Left ventricle myocardium inferior (tissue), 1 donor: ENCODE measurements at regions of chr14 and their contacts with region 1.

Region 1: GRCh38 chr14:22570132-22570949 is 18.7 kb downstream of the DAD1 start:
- DNase-seq: no peak
- H3K4me3 ChIP-seq: no peak overlapping the region
- H3K27ac ChIP-seq: peak overlapping the region; percentile 30
- H3K4me1 ChIP-seq: peaks cover 26% of the 10 kb centered on the region
- H3K27me3 ChIP-seq: no peaks in the 10 kb centered on the region
- CTCF ChIP-seq: peak; percentile 86

Region 2: DNA sequence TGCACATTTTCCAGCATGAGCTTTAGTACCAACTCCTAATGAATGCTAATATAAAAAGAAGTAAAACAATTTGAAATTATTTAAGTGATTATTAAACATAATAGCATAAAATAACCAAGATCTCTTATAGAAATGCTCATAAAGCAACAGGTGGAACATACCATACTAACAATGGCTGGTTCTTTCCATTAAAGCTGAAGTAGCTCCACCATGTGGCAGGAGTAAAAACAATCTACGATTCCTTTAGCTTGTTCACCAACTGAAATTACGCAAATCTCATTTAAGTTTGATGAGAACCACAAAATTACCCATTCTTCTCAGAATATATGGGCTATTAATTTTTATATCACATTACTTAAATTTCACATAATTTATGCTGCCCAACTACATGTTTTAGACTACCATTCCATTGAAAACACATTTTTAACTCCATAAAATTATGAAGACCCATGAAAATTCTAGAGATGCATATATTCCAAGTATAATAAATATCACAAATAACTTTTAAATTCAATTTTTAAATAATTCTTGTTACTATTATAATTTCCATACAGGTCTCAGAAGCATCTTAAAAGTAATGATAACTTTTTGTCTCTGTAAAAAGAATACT is 194.9 kb before region 1 on chr14:
- intact Hi-C with region 1: no loop called
- DNase-seq: no peak
- H3K4me3 ChIP-seq: no peak overlapping the region
- H3K27ac ChIP-seq: no peak overlapping the region
- H3K4me1 ChIP-seq: peaks cover 15% of the 10 kb centered on the region
- H3K27me3 ChIP-seq: no peaks in the 10 kb centered on the region
- CTCF ChIP-seq: peak; percentile 72

Region 3: GRCh38 chr14:22630486-22630885 is 60.1 kb after region 1 on chr14:
- intact Hi-C with region 1: no loop called
- DNase-seq: no peak
- H3K4me3 ChIP-seq: no peak overlapping the region
- H3K27ac ChIP-seq: no peak overlapping the region
- H3K4me1 ChIP-seq: no peaks in the 10 kb centered on the region
- H3K27me3 ChIP-seq: peaks cover 3% of the 10 kb centered on the region
- CTCF ChIP-seq: no peak

Region 4: DNA sequence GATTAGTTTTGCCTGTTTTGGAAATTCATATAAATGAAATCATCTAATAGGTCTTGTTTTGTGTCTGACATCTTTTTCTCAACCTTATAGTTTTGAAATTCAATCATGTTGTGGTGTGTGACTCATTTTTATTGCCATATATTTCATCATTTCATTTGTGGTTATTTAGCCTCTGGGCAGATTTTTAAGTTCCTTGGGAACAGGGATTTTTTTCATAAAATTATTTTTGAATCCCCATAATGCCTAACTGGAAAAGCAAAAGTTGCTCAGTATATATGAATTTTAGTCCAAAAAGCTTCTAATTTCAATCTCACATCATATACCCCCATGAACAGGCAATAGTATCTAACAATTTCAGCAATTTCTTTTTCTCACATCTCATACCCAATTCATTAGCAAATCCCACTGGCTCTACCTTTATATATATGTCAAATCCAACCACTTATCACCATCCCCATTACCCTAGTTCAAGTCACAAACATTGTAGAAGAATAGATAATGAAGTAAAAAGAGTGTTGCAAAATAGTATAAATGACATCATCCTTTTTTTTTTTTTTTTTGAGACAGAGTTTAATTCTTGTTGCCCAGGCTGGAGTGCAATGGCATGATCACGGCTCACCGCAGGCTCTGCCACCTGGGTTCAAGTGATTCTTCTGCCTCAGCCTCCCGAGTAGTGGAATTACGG is 76.4 kb after region 1 on chr14:
- intact Hi-C with region 1: loop called (anchors 10 kb)
- DNase-seq: no peak
- H3K4me3 ChIP-seq: no peak overlapping the region
- H3K27ac ChIP-seq: no peak overlapping the region
- H3K4me1 ChIP-seq: no peaks in the 10 kb centered on the region
- H3K27me3 ChIP-seq: no peaks in the 10 kb centered on the region
- CTCF ChIP-seq: no peak